Calu3 (cell line): ENCODE measurements at regions of chr17 and their contacts with region 1.

Region 1: DNA sequence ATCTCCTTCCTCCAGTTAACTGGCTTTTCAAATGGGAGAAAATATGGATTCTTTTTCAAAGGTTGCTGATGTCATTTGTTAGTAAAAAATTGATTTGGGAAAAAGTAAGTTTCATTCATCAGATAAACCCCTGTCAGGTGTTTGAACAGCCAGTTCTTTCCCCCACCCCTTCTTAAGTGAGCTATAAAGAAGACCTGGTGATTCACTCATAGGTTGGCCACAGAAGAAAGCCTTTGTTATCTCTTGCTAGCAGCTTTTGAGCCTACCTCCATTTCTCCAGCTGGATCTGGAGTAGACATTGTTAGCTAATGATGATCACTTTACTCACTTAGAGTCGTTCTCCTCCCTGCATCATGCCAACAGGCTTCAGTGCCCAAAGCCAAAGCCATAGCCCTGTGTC is 63.0 kb downstream of the NLK start:
- DNase-seq: no peak
- H3K4me3 Mint-ChIP-seq: no peak overlapping the region
- H3K27ac Mint-ChIP-seq: no peak overlapping the region
- H3K4me1 Mint-ChIP-seq: peaks cover 4% of the 10 kb centered on the region
- H3K27me3 Mint-ChIP-seq: no peaks in the 10 kb centered on the region
- CTCF ChIP-seq: no peak

Region 2: GRCh38 chr17:27944546-27945332 is 160.8 kb before region 1 on chr17:
- CTCF ChIA-PET with region 1: no interaction called
- intact Hi-C with region 1: no loop called
- DNase-seq: no peak
- H3K4me3 Mint-ChIP-seq: no peak overlapping the region
- H3K27ac Mint-ChIP-seq: no peak overlapping the region
- H3K4me1 Mint-ChIP-seq: no peaks in the 10 kb centered on the region
- H3K27me3 Mint-ChIP-seq: peaks cover 68% of the 10 kb centered on the region
- CTCF ChIP-seq: no peak

Region 3: GRCh38 chr17:28071891-28072606 is 33.5 kb before region 1 on chr17:
- CTCF ChIA-PET with region 1: no interaction called
- intact Hi-C with region 1: loop called (anchors 5 kb)
- DNase-seq: no peak
- H3K4me3 Mint-ChIP-seq: no peak overlapping the region
- H3K27ac Mint-ChIP-seq: no peak overlapping the region
- H3K4me1 Mint-ChIP-seq: peaks cover 9% of the 10 kb centered on the region
- H3K27me3 Mint-ChIP-seq: no peaks in the 10 kb centered on the region
- CTCF ChIP-seq: no peak

Region 4: DNA sequence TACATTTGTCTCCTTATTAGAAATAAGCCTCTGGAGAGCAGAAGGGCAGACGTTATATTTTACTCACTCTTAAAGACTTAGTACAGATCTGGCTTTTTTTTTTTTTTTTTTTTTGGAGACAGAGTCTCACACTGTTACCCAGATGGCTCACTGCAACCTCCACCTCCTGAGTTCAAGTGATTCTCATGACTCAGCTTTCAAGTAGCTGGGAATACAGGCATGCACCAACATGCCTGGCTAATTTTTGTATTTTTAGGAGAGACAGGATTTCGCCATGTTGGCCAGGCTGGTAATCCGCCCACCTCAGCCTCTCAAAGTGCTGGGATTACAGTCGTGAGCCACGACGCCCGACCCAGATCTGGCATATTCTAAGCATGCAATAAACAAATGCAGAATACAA is 177.1 kb after region 1 on chr17:
- CTCF ChIA-PET with region 1: no interaction called
- intact Hi-C with region 1: no loop called
- DNase-seq: no peak
- H3K4me3 Mint-ChIP-seq: no peak overlapping the region
- H3K27ac Mint-ChIP-seq: no peak overlapping the region
- H3K4me1 Mint-ChIP-seq: no peaks in the 10 kb centered on the region
- H3K27me3 Mint-ChIP-seq: no peaks in the 10 kb centered on the region
- CTCF ChIP-seq: no peak

Region 5: DNA sequence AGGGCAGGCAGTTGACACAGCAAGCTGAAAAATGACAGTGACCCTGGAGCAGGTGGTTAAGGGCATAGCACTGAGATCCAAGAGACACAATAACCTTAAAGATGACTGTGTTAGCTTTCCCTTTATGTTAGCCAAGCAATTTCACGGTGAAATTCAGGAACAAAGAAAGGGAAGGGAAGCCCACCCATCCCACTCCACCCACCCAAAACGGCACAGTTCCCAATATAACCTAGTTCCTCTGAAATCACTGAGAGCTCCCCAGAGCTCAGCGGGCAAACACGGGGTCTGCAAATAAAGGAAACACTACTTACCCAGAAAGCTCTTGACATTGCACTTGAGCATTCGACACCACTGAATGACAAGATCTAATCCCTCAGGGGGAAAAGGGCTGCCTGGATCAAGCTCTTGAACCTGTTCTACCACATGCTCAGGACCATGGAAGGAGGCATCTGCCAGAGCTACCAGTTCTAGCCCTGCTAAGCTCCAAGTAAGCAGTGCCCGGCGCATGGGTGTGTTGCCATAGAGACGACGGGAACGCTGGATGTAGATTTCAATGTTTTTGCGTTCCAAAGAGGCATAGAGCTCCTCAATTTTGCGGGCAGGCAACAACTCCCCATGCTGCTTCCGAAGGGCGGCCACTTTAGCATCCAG is 528.8 kb after region 1 on chr17:
- CTCF ChIA-PET with region 1: no interaction called
- intact Hi-C with region 1: no loop called
- DNase-seq: no peak
- H3K4me3 Mint-ChIP-seq: no peak overlapping the region
- H3K27ac Mint-ChIP-seq: no peak overlapping the region
- H3K4me1 Mint-ChIP-seq: no peaks in the 10 kb centered on the region
- H3K27me3 Mint-ChIP-seq: no peaks in the 10 kb centered on the region
- CTCF ChIP-seq: no peak